Calu3 (cell line): ENCODE measurements at regions of chr10 and their contacts with region 1.

Region 1: GRCh38 chr10:126969310-126969709 is 64.1 kb downstream of the DOCK1 start:
- DNase-seq: peak; percentile 9
- H3K4me3 Mint-ChIP-seq: no peak overlapping the region
- H3K27ac Mint-ChIP-seq: no peak overlapping the region
- H3K4me1 Mint-ChIP-seq: peaks cover 14% of the 10 kb centered on the region
- H3K27me3 Mint-ChIP-seq: no peaks in the 10 kb centered on the region
- CTCF ChIP-seq: no peak

Region 2: GRCh38 chr10:125936331-125936730 is 1033.0 kb before region 1 on chr10:
- CTCF ChIA-PET with region 1: no interaction called
- intact Hi-C with region 1: loop called (anchors 10 kb)
- DNase-seq: no peak
- H3K4me3 Mint-ChIP-seq: no peak overlapping the region
- H3K27ac Mint-ChIP-seq: no peak overlapping the region
- H3K4me1 Mint-ChIP-seq: no peaks in the 10 kb centered on the region
- H3K27me3 Mint-ChIP-seq: no peaks in the 10 kb centered on the region
- CTCF ChIP-seq: no peak

Region 3: GRCh38 chr10:126904819-126905686 is 64.3 kb before region 1 on chr10 and contains the start of gene DOCK1:
- CTCF ChIA-PET with region 1: no interaction called
- intact Hi-C with region 1: loop called (anchors 10 kb)
- DNase-seq: peak; percentile 71
- H3K4me3 Mint-ChIP-seq: peak within 1 kb of the TSS; percentile 67
- H3K27ac Mint-ChIP-seq: peak within 1 kb of the TSS; percentile 88
- H3K4me1 Mint-ChIP-seq: peaks cover 39% of the 10 kb centered on the region
- H3K27me3 Mint-ChIP-seq: no peaks in the 10 kb centered on the region
- CTCF ChIP-seq: no peak
- total RNA-seq, gene DOCK1: 29.1 and 34.2 TPM in 2 replicates

Region 4: GRCh38 chr10:127012769-127013152 is 43.5 kb after region 1 on chr10:
- CTCF ChIA-PET with region 1: no interaction called
- intact Hi-C with region 1: loop called (anchors 5 kb)
- DNase-seq: peak; percentile 77
- H3K4me3 Mint-ChIP-seq: peak overlapping the region; percentile 30
- H3K27ac Mint-ChIP-seq: peak overlapping the region; percentile 54
- H3K4me1 Mint-ChIP-seq: peaks cover 20% of the 10 kb centered on the region
- H3K27me3 Mint-ChIP-seq: no peaks in the 10 kb centered on the region
- CTCF ChIP-seq: no peak

Region 5: DNA sequence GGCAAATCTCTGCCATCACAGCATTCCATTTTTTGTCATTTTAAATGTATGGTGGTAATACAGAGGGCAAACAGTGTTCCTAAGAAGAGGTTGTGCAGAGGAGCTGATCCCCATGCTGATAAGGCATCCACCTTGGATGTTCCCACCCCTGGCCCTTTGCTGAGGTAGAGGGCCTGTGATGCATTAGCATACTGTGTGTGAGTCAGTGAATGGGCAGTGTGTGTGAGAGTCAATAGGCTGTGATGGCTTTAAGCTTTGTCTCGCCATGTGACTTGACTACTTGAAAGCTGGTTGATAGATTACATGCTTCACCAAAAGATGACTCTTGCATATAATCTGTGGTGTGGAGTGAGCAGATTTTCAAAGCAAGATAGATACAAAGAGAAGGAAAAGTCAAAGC is 145.8 kb after region 1 on chr10:
- CTCF ChIA-PET with region 1: no interaction called
- intact Hi-C with region 1: no loop called
- DNase-seq: no peak
- H3K4me3 Mint-ChIP-seq: no peak overlapping the region
- H3K27ac Mint-ChIP-seq: no peak overlapping the region
- H3K4me1 Mint-ChIP-seq: no peaks in the 10 kb centered on the region
- H3K27me3 Mint-ChIP-seq: no peaks in the 10 kb centered on the region
- CTCF ChIP-seq: no peak